MCF 10A (cell line): ENCODE measurements at regions of chr14 and their contacts with region 1.

Region 1: DNA sequence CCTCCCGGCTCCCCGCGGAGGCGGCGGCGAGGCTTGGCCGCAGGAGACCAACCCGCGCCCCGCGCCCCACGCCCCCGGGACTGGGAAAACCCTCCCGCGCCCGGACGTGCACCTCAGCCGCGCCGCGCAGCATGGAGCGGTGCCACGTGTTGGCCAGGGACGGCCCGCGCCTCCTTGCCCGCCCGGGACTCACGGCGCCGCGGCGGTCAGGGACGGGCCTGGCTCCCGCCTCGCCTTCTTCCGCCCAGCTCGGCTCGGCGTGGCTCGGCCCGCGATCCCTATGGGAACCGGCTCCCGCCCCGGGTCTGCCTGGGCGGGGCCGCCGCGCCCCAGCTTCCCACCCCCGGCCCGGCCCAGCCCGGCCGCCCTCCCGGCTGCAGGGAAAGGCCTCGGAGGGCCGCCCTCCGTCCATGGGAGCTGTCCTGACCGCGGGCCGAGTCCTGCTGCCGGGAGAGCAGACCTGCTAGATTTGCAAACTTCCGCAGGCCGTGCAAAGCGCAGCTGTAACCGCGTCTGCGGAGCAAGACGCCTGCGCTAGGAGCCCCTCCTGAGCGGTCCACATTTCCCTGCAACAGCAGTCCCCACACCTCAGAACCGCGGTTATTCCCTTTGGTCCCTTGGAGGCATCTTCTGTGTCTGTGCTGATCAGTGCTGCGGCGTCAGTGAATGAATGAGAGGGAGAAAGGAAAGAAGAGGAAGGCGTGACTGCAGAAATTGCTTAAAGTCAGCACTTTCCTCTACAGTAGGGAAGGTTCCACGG is at the start of gene CDKL1:
- DNase-seq: peak; percentile 76
- H3K4me3 Mint-ChIP-seq: peak within 1 kb of the TSS; percentile 86
- H3K27ac Mint-ChIP-seq: peak within 1 kb of the TSS; percentile 90
- H3K4me1 Mint-ChIP-seq: peaks cover 18% of the 10 kb centered on the region
- H3K27me3 Mint-ChIP-seq: no peaks in the 10 kb centered on the region
- CTCF ChIP-seq: no peak
- total RNA-seq, gene CDKL1: 14.3 and 26.3 TPM in 2 replicates

Region 2: GRCh38 chr14:50360851-50361250 is 36.0 kb before region 1 on chr14:
- CTCF ChIA-PET with region 1: interaction called, 3 read pairs
- POLR2A ChIA-PET with region 1: interaction called, 12 read pairs
- intact Hi-C with region 1: no loop called
- DNase-seq: peak; percentile 7
- H3K4me3 Mint-ChIP-seq: no peak overlapping the region
- H3K27ac Mint-ChIP-seq: no peak overlapping the region
- H3K4me1 Mint-ChIP-seq: peaks cover 16% of the 10 kb centered on the region
- H3K27me3 Mint-ChIP-seq: no peaks in the 10 kb centered on the region
- CTCF ChIP-seq: no peak

Region 3: DNA sequence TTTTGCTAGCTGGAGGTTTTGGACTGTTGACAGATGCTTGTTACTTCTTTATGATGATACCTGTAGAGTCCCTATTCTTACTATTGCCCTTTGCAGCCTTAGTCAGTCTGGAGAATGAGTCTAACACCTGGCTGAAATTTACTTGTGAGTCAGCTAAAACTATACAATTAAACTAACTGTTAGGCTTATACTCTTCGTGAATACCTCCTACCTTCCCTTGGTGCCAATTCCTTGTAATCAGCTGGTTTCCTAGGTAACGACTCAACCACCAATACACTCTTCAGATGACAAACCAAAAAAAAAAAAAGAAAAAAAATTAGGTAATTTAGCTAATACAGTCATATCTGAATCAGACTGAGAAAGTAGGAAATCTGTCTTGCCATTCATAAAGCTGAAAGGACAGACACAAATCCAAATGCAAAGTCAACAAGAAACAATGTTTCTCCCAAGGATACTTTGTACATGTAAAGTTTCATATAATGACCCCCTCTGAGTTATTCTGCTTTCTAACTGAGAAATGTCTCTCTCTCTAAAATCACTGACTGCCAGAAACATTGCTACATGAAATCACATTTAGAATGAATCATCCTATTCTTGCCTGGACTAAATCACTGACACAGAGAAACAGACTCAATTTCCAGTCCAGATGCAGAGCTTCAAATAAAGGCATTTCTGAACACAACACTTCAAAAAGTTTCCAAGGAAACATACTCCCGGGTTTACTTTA is 56.3 kb after region 1 on chr14:
- CTCF ChIA-PET with region 1: interaction called, 3 read pairs
- POLR2A ChIA-PET with region 1: interaction called, 9 read pairs
- intact Hi-C with region 1: loop called (anchors 10 kb)
- DNase-seq: peak; percentile 61
- H3K4me3 Mint-ChIP-seq: no peak overlapping the region
- H3K27ac Mint-ChIP-seq: peak overlapping the region; percentile 71
- H3K4me1 Mint-ChIP-seq: peaks cover 16% of the 10 kb centered on the region
- H3K27me3 Mint-ChIP-seq: no peaks in the 10 kb centered on the region
- CTCF ChIP-seq: no peak